MCF 10A (cell line): ENCODE measurements at regions of chr16 and their contacts with region 1.

Region 1: GRCh38 chr16:13919683-13920509 is at the start of gene ERCC4:
- DNase-seq: peak; percentile 99
- H3K4me3 Mint-ChIP-seq: peak within 1 kb of the TSS; percentile 91
- H3K27ac Mint-ChIP-seq: peak within 1 kb of the TSS; percentile 95
- H3K4me1 Mint-ChIP-seq: peaks cover 11% of the 10 kb centered on the region
- H3K27me3 Mint-ChIP-seq: peaks cover 10% of the 10 kb centered on the region
- CTCF ChIP-seq: peak; percentile 72
- total RNA-seq, gene ERCC4: 10.3 and 15.9 TPM in 2 replicates

Region 2: GRCh38 chr16:13866073-13866472 is 53.8 kb before region 1 on chr16:
- CTCF ChIA-PET with region 1: interaction called, 12 read pairs
- POLR2A ChIA-PET with region 1: interaction called, 3 read pairs
- intact Hi-C with region 1: loop called (anchors 10 kb)
- DNase-seq: peak; percentile 78
- H3K4me3 Mint-ChIP-seq: no peak overlapping the region
- H3K27ac Mint-ChIP-seq: no peak overlapping the region
- H3K4me1 Mint-ChIP-seq: no peaks in the 10 kb centered on the region
- H3K27me3 Mint-ChIP-seq: peaks cover 32% of the 10 kb centered on the region
- CTCF ChIP-seq: peak; percentile 67

Region 3: DNA sequence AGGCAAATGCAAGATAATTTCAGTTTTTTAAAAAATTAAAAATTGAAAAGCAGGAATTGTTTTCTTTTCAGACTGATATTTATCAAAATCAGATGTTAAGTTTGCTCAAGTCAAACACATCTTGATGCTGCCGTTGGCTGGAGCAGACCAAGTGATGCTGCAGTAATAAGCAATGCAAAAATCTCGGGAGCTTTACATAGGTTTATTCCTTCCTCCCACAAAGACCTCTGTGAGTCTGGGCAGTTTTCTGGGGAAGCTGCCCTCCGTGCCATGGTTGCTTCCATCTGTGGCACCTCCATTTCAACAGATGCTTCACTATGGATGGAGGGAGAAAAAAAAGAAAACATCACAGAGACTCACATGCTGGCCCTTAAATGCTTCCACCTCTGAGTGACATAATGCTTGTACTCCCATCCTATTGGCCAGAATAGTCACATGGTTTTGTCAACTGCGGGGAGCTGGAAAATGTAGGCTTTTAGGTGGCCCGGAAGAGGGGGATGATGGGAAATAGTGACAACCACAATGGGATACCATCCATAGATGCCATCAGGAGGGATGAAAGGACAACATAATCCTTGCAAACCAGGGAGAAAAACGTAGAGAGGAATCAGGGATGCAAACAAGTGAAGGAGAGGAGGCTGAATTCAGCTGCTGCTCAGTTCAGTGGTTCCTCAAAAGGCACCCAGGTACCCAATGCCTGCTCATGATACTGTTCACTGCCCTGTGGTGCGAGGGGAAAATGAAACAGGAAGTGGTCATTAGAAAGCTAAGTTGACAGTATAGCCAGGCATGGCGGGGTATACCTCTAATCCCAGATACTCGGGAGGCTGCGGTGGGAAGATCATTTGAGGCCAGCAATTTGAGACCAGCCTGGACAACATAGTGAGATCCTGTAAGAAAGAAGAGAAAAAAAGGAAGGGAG is 13.5 kb before region 1 on chr16:
- CTCF ChIA-PET with region 1: interaction called, 30 read pairs
- POLR2A ChIA-PET with region 1: interaction called, 4 read pairs
- intact Hi-C with region 1: no loop called
- DNase-seq: no peak
- H3K4me3 Mint-ChIP-seq: no peak overlapping the region
- H3K27ac Mint-ChIP-seq: no peak overlapping the region
- H3K4me1 Mint-ChIP-seq: peaks cover 8% of the 10 kb centered on the region
- H3K27me3 Mint-ChIP-seq: peaks cover 7% of the 10 kb centered on the region
- CTCF ChIP-seq: no peak

Region 4: DNA sequence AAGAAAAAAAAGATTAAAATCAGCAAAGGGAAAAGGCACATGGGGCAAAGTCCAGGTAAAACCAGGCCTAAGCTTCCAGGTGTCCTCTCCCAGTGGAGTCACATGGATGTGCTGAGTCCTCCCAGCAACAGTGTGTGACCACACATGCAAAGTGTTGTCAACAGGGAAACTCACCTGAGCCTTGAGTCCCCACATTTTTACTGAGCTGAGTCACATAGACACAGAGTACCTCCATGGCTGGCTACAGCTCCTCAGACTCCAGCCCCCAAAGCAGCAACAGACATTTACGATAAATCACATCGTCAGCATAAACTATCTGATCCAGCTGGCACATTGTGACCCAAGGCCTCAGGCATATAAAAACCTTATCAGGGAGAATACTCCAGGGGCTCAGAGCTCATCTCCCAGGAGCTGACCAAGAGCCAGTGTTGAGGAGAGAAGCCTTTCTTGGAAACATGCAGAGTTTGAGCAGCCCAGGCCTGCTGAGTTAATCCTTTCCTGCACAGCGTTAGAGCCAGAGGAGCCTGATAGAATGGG is 20.6 kb after region 1 on chr16:
- CTCF ChIA-PET with region 1: interaction called, 22 read pairs
- POLR2A ChIA-PET with region 1: interaction called, 5 read pairs
- intact Hi-C with region 1: no loop called
- DNase-seq: no peak
- H3K4me3 Mint-ChIP-seq: no peak overlapping the region
- H3K27ac Mint-ChIP-seq: no peak overlapping the region
- H3K4me1 Mint-ChIP-seq: peaks cover 9% of the 10 kb centered on the region
- H3K27me3 Mint-ChIP-seq: no peaks in the 10 kb centered on the region
- CTCF ChIP-seq: no peak

Region 5: GRCh38 chr16:14186007-14186794 is 266.3 kb after region 1 on chr16:
- CTCF ChIA-PET with region 1: interaction called, 15 read pairs
- POLR2A ChIA-PET with region 1: no interaction called
- intact Hi-C with region 1: no loop called
- DNase-seq: peak; percentile 18
- H3K4me3 Mint-ChIP-seq: no peak overlapping the region
- H3K27ac Mint-ChIP-seq: no peak overlapping the region
- H3K4me1 Mint-ChIP-seq: peaks cover 15% of the 10 kb centered on the region
- H3K27me3 Mint-ChIP-seq: no peaks in the 10 kb centered on the region
- CTCF ChIP-seq: peak; percentile 11

Region 6: GRCh38 chr16:14285513-14286385 is 365.9 kb after region 1 on chr16:
- CTCF ChIA-PET with region 1: interaction called, 11 read pairs
- POLR2A ChIA-PET with region 1: interaction called, 11 read pairs
- intact Hi-C with region 1: loop called (anchors 1 kb)
- DNase-seq: peak; percentile 92
- H3K4me3 Mint-ChIP-seq: peak overlapping the region; percentile 82
- H3K27ac Mint-ChIP-seq: peak overlapping the region; percentile 23
- H3K4me1 Mint-ChIP-seq: peaks cover 5% of the 10 kb centered on the region
- H3K27me3 Mint-ChIP-seq: no peaks in the 10 kb centered on the region
- CTCF ChIP-seq: no peak